GM12878 (cell line): ENCODE measurements at regions of chr9 and their contacts with region 1.

Region 1: GRCh38 chr9:124040935-124041816 is 29.6 kb downstream of the LHX2 start:
- DNase-seq: no peak
- ATAC-seq: peak; percentile 85
- H3K4me3 ChIP-seq: peak overlapping the region; percentile 28; the same call in 1 of the 2 replicates
- H3K27ac ChIP-seq: no peak overlapping the region
- H3K4me1 ChIP-seq: peaks cover 6% of the 10 kb centered on the region
- H3K27me3 ChIP-seq: peaks cover 2 to 6% of the 10 kb centered on the region in 2 experiments
- CTCF ChIP-seq: peak; percentile 87 to 95 (median 90)
- EP300 ChIP-seq: no peak
- POLR2A ChIP-seq: no peak
- RAD21 ChIP-seq: peak; percentile 85

Region 2: DNA sequence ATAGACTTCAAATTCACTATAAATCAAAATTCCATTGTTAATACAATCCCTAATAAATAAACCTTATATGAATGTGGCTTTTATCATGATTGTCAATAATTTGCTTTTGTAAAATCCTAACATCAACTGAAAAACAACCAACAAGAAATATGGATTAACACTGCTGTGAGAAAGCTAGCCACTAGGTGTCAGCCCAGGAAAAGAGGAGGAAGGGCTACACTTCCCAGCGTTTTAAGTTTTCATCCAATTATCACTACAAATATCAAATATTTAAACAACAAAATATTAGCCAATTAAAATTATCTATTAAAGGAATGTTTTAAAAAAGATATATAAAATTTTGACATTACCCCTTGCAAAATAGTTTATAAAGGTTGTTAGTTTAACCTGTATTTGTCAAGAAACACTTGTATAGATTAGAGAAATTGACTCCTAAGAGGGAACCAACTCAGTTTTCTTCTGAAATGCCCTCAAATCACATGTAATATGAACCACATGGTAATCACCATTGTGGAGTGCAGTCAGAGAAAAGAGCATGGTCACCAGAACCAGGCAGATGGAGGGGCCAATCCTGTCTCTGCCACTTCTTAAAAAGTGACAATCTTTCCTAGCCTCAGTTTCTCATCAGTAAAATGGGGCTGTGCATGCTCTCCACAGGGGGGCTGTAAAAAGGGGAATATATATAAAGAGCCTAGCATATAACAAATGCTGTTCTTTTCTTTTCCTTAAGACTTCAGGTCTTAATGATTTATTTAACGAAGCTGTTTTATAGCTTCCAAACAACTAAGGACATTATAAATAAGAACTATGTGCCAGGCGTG is 497.0 kb before region 1 on chr9:
- CTCF ChIA-PET with region 1: interaction called, 124 read pairs
- POLR2A ChIA-PET with region 1: interaction called, 3 read pairs
- RAD21 ChIA-PET with region 1: interaction called, 39 read pairs
- SMC1A ChIA-PET with region 1: interaction called, 68 read pairs
- in situ Hi-C with region 1: no loop called
- intact Hi-C with region 1: loop called (anchors 1 kb)
- DNase-seq: no peak
- ATAC-seq: peak; percentile 65
- H3K4me3 ChIP-seq: no peak overlapping the region
- H3K27ac ChIP-seq: no peak overlapping the region
- H3K4me1 ChIP-seq: no peaks in the 10 kb centered on the region
- H3K27me3 ChIP-seq: no peaks in the 10 kb centered on the region
- CTCF ChIP-seq: peak; percentile 68 to 89 (median 81)
- EP300 ChIP-seq: no peak
- POLR2A ChIP-seq: no peak
- RAD21 ChIP-seq: peak; percentile 98

Region 3: GRCh38 chr9:123679322-123679987 is 361.7 kb before region 1 on chr9:
- CTCF ChIA-PET with region 1: no interaction called
- POLR2A ChIA-PET with region 1: no interaction called
- RAD21 ChIA-PET with region 1: interaction called, 11 read pairs
- SMC1A ChIA-PET with region 1: no interaction called
- in situ Hi-C with region 1: no loop called
- intact Hi-C with region 1: no loop called
- DNase-seq: peak; percentile 95
- ATAC-seq: peak; percentile 97
- H3K4me3 ChIP-seq: no peak overlapping the region
- H3K27ac ChIP-seq: peak overlapping the region; percentile 72
- H3K4me1 ChIP-seq: peaks cover 31% of the 10 kb centered on the region
- H3K27me3 ChIP-seq: no peaks in the 10 kb centered on the region
- CTCF ChIP-seq: no peak
- EP300 ChIP-seq: peak in 1 of 2 experiments; percentile 82; a peak in 3 of 4 replicates
- POLR2A ChIP-seq: peak; percentile 60; the same call in 1 of the 2 replicates
- RAD21 ChIP-seq: peak; percentile 21; the same call in 1 of the 2 replicates

Region 4: DNA sequence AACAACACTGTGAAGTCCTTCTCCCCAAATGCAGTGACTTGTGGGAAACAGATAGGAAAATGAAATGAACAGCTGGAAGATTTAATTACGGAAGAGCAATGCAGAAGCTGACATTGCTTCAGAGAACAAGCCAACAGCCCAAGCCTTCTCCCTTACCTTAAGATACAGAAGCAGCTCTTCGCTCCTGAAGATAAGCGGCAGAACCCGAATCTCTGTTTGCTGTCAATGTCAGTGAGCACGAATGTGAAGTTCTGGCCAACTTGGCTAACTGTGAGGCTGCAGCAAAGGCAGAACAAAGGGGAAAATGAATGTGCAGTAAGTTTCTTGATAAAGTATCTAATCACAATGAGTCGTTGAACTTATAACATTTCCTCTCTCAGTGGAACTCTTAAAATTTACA is 283.6 kb before region 1 on chr9:
- CTCF ChIA-PET with region 1: no interaction called
- POLR2A ChIA-PET with region 1: no interaction called
- RAD21 ChIA-PET with region 1: no interaction called
- SMC1A ChIA-PET with region 1: interaction called, 14 read pairs
- in situ Hi-C with region 1: no loop called
- intact Hi-C with region 1: no loop called
- DNase-seq: no peak
- ATAC-seq: no peak
- H3K4me3 ChIP-seq: no peak overlapping the region
- H3K27ac ChIP-seq: no peak overlapping the region
- H3K4me1 ChIP-seq: peaks cover 17% of the 10 kb centered on the region
- H3K27me3 ChIP-seq: no peaks in the 10 kb centered on the region
- CTCF ChIP-seq: no peak
- EP300 ChIP-seq: no peak
- POLR2A ChIP-seq: no peak
- RAD21 ChIP-seq: no peak

Region 5: GRCh38 chr9:123954518-123955280 is 86.5 kb before region 1 on chr9:
- CTCF ChIA-PET with region 1: interaction called, 161 read pairs
- POLR2A ChIA-PET with region 1: no interaction called
- RAD21 ChIA-PET with region 1: interaction called, 89 read pairs
- SMC1A ChIA-PET with region 1: interaction called, 90 read pairs
- in situ Hi-C with region 1: no loop called
- intact Hi-C with region 1: no loop called
- DNase-seq: no peak
- ATAC-seq: no peak
- H3K4me3 ChIP-seq: no peak overlapping the region
- H3K27ac ChIP-seq: no peak overlapping the region
- H3K4me1 ChIP-seq: peaks cover 5% of the 10 kb centered on the region
- H3K27me3 ChIP-seq: no peaks in the 10 kb centered on the region
- CTCF ChIP-seq: no peak
- EP300 ChIP-seq: no peak
- POLR2A ChIP-seq: no peak
- RAD21 ChIP-seq: no peak

Region 6: DNA sequence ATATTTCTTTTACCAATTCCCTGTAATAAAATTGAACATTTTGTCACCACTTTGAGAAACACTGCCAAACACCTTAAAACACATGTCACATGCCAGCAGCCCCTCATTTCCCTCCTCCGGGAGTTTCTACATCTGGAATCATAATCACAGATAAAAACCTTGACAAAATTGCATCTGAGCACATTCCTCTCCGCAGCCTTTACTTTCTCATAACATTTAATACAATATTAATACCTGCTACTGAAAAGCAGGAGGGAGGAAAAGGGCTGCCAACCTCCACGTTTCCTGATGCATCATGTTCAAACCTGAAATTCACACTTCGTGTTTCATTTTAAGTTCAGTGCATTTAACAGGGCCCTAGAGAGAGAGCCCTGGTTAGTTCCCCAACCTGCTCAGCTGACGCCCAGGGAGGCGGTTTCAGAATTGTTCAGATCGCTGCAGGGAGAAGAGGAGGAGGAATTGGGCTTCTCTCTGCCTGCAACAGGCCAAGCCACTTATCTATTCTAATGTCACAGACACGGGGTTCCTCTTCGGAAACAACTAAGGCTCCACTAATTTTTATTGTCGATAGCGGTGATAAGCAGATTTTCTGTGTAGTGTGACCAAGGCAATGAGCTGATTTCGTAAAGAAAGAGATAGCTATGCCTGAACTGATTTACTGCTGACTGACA is 34.6 kb before region 1 on chr9:
- CTCF ChIA-PET with region 1: interaction called, 45 read pairs
- POLR2A ChIA-PET with region 1: interaction called, 4 read pairs
- RAD21 ChIA-PET with region 1: interaction called, 52 read pairs
- SMC1A ChIA-PET with region 1: interaction called, 55 read pairs
- in situ Hi-C with region 1: no loop called
- intact Hi-C with region 1: no loop called
- DNase-seq: no peak
- ATAC-seq: peak; percentile 62
- H3K4me3 ChIP-seq: no peak overlapping the region
- H3K27ac ChIP-seq: no peak overlapping the region
- H3K4me1 ChIP-seq: peaks cover 25% of the 10 kb centered on the region
- H3K27me3 ChIP-seq: peaks cover 0 to 54% of the 10 kb centered on the region in 2 experiments; a peak in 3 of 4 replicates
- CTCF ChIP-seq: no peak
- EP300 ChIP-seq: no peak; a peak in 1 of 4 replicates
- POLR2A ChIP-seq: no peak
- RAD21 ChIP-seq: no peak

Region 7: GRCh38 chr9:124054582-124055227 is 13.5 kb after region 1 on chr9:
- CTCF ChIA-PET with region 1: interaction called, 24 read pairs
- POLR2A ChIA-PET with region 1: no interaction called
- RAD21 ChIA-PET with region 1: interaction called, 12 read pairs
- SMC1A ChIA-PET with region 1: interaction called, 7 read pairs
- in situ Hi-C with region 1: no loop called
- intact Hi-C with region 1: no loop called
- DNase-seq: peak; percentile 87
- ATAC-seq: peak; percentile 99
- H3K4me3 ChIP-seq: no peak overlapping the region
- H3K27ac ChIP-seq: no peak overlapping the region
- H3K4me1 ChIP-seq: peaks cover 4% of the 10 kb centered on the region
- H3K27me3 ChIP-seq: peaks cover 0 to 5% of the 10 kb centered on the region in 2 experiments; a peak in 1 of 4 replicates
- CTCF ChIP-seq: peak in 2 of 3 experiments; percentile 2 to 17; a peak in 1 of 6 replicates
- EP300 ChIP-seq: peak; percentile 74 to 81; a peak in 3 of 4 replicates
- POLR2A ChIP-seq: no peak
- RAD21 ChIP-seq: 0 out of 2 replicates have a peak, but pooled peaks have one; percentile 11

Region 8: DNA sequence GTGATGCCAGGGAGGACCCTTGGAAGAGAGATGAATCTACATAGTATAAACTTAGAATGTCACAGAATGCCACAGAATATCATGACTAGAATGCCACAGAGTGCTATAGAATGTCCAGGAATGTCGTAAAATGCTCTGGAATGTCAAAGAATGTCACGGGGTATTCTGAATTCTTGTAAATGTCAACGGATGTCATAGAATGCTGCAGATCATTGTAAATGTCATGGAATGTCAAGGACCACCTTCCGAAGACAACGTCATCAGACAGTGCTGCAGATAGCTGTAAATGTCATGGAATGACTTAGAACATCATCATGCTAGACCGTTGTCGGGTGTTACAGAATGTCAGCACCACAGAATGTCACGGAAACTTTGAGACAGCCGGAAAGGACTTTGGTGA is 87.4 kb after region 1 on chr9:
- CTCF ChIA-PET with region 1: no interaction called
- POLR2A ChIA-PET with region 1: no interaction called
- RAD21 ChIA-PET with region 1: no interaction called
- SMC1A ChIA-PET with region 1: no interaction called
- in situ Hi-C with region 1: no loop called
- intact Hi-C with region 1: no loop called
- DNase-seq: no peak
- ATAC-seq: no peak
- H3K4me3 ChIP-seq: no peak overlapping the region
- H3K27ac ChIP-seq: no peak overlapping the region
- H3K4me1 ChIP-seq: peaks cover 9% of the 10 kb centered on the region; the same call in 1 of the 2 replicates
- H3K27me3 ChIP-seq: no peaks in the 10 kb centered on the region
- CTCF ChIP-seq: no peak
- EP300 ChIP-seq: no peak
- POLR2A ChIP-seq: no peak
- RAD21 ChIP-seq: no peak